PC-3 (cell line): ENCODE measurements at regions of chr10 and their contacts with region 1.

Region 1: GRCh38 chr10:114060456-114060855 is 16.8 kb downstream of the ADRB1 start:
- DNase-seq: no peak
- ATAC-seq: no peak
- H3K4me3 ChIP-seq: no peak overlapping the region
- H3K27ac ChIP-seq: no peak overlapping the region
- H3K4me1 ChIP-seq: no peaks in the 10 kb centered on the region
- H3K27me3 ChIP-seq: no peaks in the 10 kb centered on the region
- CTCF ChIP-seq: no peak

Region 2: GRCh38 chr10:114073395-114074186 is 13.1 kb after region 1 on chr10:
- CTCF ChIA-PET with region 1: no interaction called
- POLR2A ChIA-PET with region 1: no interaction called
- intact Hi-C with region 1: no loop called
- DNase-seq: no peak
- ATAC-seq: no peak
- H3K4me3 ChIP-seq: no peak overlapping the region
- H3K27ac ChIP-seq: no peak overlapping the region
- H3K4me1 ChIP-seq: no peaks in the 10 kb centered on the region
- H3K27me3 ChIP-seq: no peaks in the 10 kb centered on the region
- CTCF ChIP-seq: no peak

Region 3: GRCh38 chr10:114095559-114096337 is 35.3 kb after region 1 on chr10:
- CTCF ChIA-PET with region 1: no interaction called
- POLR2A ChIA-PET with region 1: no interaction called
- intact Hi-C with region 1: loop called (anchors 1 kb)
- DNase-seq: no peak
- ATAC-seq: no peak
- H3K4me3 ChIP-seq: no peak overlapping the region
- H3K27ac ChIP-seq: no peak overlapping the region
- H3K4me1 ChIP-seq: peaks cover 9% of the 10 kb centered on the region; the same call in 1 of the 2 replicates
- H3K27me3 ChIP-seq: no peaks in the 10 kb centered on the region
- CTCF ChIP-seq: no peak